ENCODE measurements at regions of chr1 and their contacts with region 1.

Region 1: DNA sequence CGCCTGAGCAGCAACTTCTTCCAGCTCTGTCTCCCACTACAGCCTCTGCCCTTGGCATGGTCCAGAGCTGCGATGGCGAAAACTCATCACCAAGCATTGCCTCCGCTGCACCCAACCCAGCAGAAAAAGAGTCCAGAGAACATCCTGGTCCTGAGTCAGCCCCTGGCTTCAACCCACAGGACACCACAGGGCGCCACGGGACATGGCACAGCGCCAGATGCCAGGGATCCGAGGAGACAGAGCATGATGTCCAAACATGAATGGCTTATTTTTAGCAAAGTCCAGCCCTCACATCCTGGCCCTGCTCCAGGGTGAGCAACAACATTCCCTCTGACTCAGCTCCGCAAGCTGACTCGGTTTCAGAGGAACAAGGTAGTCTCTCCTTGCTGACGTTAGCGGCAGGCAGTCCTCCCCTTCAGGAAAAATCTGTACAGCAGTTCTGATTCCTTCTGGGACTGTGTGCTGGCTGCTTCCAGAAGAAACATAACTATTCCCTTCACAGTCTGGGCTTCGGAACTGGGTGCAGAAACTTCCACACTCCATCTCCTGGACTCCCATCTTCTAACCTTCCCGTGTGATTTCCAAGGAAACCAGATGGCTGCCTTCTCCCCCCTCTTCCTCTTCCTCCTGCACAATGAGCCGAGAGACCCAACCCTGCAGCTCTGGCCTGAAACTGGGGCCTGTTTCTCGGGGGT is 131.3 kb downstream of the TOMM20 start:
- DNase-seq: peak; percentile 99 to 100
- ATAC-seq: peak; percentile 88 to 93
- H3K4me3 ChIP-seq: peak overlapping the region in 3 of 4 donors; percentile 12 to 24 (median 18)
- H3K27ac ChIP-seq: peak overlapping the region; percentile 93 to 99 (median 94)
- H3K4me1 ChIP-seq: peaks cover 25 to 28% of the 10 kb centered on the region in 2 donors
- H3K27me3 ChIP-seq: no peaks in the 10 kb centered on the region
- CTCF ChIP-seq: peak in 1 of 5 experiments; percentile 11
- POLR2A ChIP-seq: peak; percentile 59 to 73

Region 2: GRCh38 chr1:234599617-234600417 is 397.5 kb before region 1 on chr1:
- in situ Hi-C with region 1: loop called in 1 of 4 experiments (anchors 10 kb)
- intact Hi-C with region 1: no loop called
- DNase-seq: peak; percentile 84 to 94
- ATAC-seq: peak; percentile 66 to 69
- H3K4me3 ChIP-seq: peak overlapping the region; percentile 55 to 60 (median 56)
- H3K27ac ChIP-seq: peak overlapping the region; percentile 98
- H3K4me1 ChIP-seq: peaks cover 56 to 57% of the 10 kb centered on the region in 2 donors
- H3K27me3 ChIP-seq: no peaks in the 10 kb centered on the region
- CTCF ChIP-seq: peak in 1 of 5 experiments; percentile 46
- POLR2A ChIP-seq: peak; percentile 76 to 89

Region 3: GRCh38 chr1:234887016-234887900 is 110.1 kb before region 1 on chr1:
- in situ Hi-C with region 1: loop called in 3 of 4 experiments (anchors 10 to 25 kb)
- intact Hi-C with region 1: loop called (anchors 1 kb)
- DNase-seq: peak; percentile 59 to 82
- ATAC-seq: peak; percentile 48 to 57
- H3K4me3 ChIP-seq: peak overlapping the region in 3 of 4 donors; percentile 3 to 42 (median 18)
- H3K27ac ChIP-seq: peak overlapping the region; percentile 90 to 100 (median 96)
- H3K4me1 ChIP-seq: peaks cover 36 to 38% of the 10 kb centered on the region in 2 donors
- H3K27me3 ChIP-seq: no peaks in the 10 kb centered on the region
- CTCF ChIP-seq: no peak
- POLR2A ChIP-seq: peak in 1 of 2 donors; percentile 25

Region 4: DNA sequence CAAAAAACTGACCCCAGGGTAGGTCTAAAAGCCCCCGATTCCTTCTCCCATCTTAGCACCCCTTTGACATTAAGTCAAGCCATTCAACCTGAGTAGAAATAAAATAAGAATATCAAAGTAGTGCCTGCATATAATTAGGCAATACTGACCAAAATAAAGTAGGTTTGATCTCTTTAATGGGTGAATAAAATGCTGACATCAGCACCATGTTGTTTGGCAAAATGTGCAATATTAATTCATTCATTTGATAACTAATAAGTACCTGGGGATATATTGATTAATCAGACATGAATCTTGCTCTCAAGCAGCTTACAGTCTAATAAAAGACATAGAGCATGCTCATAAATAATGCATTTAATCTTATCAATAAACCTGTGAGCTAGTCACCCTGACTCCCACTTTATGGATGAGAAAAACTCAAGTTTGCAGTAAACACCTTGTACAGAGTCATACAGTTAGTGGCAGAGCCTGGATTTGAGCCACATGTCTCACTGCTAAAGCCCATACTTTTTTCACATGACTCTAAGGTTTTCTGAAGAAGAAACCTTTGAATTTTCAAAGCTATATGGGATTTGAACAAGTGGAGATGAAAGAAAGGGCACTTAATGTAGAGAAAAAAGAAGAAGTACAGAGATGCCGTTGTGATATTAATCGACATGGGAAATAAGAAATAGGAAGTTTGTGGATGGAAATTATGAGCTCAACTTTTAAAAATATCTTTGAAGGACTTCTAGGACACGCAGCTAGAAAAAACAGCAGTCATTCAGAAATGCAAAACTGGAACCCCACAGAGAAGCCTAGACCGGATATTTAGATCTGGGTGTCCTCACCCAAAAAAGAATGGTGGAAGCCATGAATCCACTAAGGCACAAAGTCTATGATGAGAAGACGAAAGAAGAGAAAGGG is 52.7 kb before region 1 on chr1:
- in situ Hi-C with region 1: no loop called
- intact Hi-C with region 1: no loop called
- DNase-seq: no peak
- ATAC-seq: no peak
- H3K4me3 ChIP-seq: no peak overlapping the region
- H3K27ac ChIP-seq: peak overlapping the region in 1 of 4 donors; percentile 28
- H3K4me1 ChIP-seq: peaks cover 0 to 3% of the 10 kb centered on the region in 2 donors
- H3K27me3 ChIP-seq: no peaks in the 10 kb centered on the region
- CTCF ChIP-seq: no peak
- POLR2A ChIP-seq: no peak

Region 5: DNA sequence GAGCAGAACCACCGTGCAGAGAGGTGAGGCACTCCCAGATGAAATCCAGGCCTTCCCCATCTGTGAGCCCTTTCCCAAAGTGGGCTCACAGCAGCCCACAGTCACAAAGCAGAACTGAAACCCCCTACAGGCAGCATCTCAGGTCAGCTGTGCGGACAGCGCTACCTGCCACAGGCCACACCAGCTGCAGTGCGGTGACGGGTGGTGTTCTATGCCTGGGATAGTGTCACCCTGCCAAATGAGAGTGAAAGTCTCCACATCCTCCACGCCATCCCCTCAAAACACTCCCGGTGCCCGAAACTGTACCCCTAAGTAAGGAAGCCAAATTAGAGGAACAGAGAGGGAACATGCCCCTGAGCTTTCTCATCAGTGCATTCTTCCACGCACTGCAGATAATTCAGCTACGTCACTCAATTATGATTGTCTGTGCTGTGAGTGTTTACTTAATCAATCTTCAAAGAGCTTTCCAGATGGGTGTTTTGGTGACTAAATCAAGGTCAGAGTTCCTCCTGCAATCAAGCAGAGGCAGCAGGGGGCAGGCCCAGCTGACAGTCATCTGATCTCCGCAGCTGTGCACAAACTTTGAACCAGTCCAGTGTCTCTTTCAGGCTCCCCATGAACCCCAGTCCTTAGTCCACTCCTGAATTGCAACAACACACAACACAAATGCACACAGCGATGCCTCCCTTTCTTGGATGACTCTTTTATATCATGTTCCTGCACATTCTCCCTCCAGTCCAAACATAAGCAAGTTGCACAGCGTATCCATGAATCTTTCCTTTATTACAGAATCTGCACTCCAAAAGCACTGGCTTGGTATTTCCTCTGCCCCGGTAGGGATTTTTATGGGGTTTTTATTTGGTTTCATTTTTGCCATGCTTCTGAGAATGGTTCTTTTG is 18.7 kb before region 1 on chr1:
- in situ Hi-C with region 1: no loop called
- intact Hi-C with region 1: loop called (anchors 2 kb)
- DNase-seq: peak; percentile 58 to 68
- ATAC-seq: peak in 1 of 2 donors; percentile 16
- H3K4me3 ChIP-seq: no peak overlapping the region
- H3K27ac ChIP-seq: peak overlapping the region; percentile 83 to 91 (median 89)
- H3K4me1 ChIP-seq: peaks cover 46 to 68% of the 10 kb centered on the region in 2 donors
- H3K27me3 ChIP-seq: no peaks in the 10 kb centered on the region
- CTCF ChIP-seq: no peak
- POLR2A ChIP-seq: peak; percentile 7 to 23

Region 6: DNA sequence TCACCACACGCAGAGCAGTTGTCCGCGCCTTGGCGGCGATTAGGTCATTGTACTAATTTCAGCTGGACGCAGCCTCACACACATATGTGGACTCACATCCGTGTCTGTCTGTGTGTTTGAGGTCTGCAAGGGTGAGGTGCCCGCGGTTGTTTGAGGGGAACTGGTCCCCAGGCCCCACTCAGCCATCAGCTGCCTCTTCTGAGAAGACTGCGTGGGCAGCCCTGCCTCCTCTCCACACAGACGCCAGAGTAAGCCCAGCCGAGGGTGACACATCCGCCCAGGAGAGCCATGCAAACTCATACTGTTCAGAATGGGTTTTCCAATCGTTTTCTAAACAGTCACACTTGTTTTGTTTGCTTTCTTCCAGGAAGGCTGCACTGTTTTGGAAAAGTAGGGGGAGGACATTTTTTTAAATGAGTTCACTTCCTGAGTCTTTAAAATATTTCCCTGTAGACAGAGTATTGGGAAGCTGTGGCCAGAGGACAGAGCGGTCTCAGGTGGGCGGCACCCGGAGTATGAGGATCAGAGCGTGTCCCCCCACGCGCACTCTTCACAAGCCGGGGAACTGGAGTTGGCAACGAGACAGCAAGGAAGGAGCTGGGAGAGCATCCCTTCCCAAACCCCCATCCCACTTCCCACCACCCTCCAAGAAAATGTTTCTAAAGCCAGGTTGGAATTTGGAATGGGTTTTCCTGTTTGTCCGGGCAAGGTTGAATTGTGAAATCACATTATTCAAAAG is 78.0 kb after region 1 on chr1:
- in situ Hi-C with region 1: loop called in 1 of 4 experiments (anchors 5 kb)
- intact Hi-C with region 1: loop called (anchors 1 kb)
- DNase-seq: peak; percentile 83 to 91
- ATAC-seq: peak; percentile 4 to 14
- H3K4me3 ChIP-seq: peak overlapping the region in 3 of 4 donors; percentile 10 to 34 (median 32)
- H3K27ac ChIP-seq: peak overlapping the region; percentile 87 to 100 (median 95)
- H3K4me1 ChIP-seq: peaks cover 77 to 82% of the 10 kb centered on the region in 2 donors
- H3K27me3 ChIP-seq: no peaks in the 10 kb centered on the region
- CTCF ChIP-seq: no peak
- POLR2A ChIP-seq: peak; percentile 80 to 85

Region 7: GRCh38 chr1:235259133-235259778 is 261.9 kb after region 1 on chr1:
- in situ Hi-C with region 1: no loop called
- intact Hi-C with region 1: no loop called
- DNase-seq: no peak
- ATAC-seq: no peak
- H3K4me3 ChIP-seq: no peak overlapping the region
- H3K27ac ChIP-seq: no peak overlapping the region
- H3K4me1 ChIP-seq: peaks cover 4 to 14% of the 10 kb centered on the region in 2 donors
- H3K27me3 ChIP-seq: no peaks in the 10 kb centered on the region
- CTCF ChIP-seq: no peak
- POLR2A ChIP-seq: no peak